ENCODE measurements at regions of chr3 and their contacts with region 1.

Region 1: DNA sequence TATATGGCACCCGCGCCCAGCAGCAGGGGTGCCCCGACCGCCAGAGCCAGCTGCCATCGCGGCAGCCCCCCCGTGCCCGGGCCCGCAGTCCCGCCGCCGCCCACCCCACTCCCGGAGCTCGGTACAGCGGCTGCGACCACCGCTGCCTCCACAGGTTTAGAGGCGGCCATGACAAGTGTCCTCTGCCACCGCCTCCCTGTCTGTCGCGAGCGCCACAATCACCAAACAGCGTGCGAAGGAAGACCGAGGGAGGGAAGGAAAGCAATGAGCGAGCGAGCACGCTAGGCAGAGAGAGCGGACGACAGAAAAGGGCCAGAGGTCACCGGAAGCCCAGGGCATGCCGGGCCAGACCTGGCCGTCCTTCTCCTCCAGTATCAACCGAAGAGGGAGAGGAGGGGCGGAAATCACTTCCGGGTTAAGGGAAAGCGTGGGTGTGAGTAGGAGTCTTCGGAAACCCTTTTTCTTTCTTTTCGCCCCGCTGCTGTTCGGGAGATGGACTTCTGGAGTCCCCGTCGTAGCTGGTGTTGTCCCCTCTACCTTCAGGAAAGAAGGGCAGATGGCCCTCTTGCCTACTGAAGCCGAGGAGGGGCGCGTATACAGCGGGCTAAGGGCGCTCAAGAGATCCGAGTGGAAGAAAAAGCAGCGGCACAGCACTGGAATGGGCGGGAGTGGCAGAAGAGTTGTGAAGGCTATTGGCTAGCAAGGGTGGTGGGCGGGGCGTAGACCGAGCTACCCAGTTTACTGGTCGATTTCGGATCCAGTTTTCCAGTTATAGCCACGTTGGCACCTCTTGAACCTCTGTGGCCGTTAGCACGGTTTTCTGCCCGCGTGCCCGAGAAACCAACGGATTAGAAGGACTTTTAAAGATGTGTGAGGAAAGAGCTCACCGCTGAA is at the starts of genes LNP1 and TOMM70:
- DNase-seq: peak; percentile 97
- H3K4me3 Mint-ChIP-seq: peak within 1 kb of the TSS; percentile 92
- H3K27ac Mint-ChIP-seq: peak within 1 kb of the TSS; percentile 94
- H3K4me1 Mint-ChIP-seq: peaks cover 62% of the 10 kb centered on the region
- H3K27me3 Mint-ChIP-seq: no peaks in the 10 kb centered on the region
- total RNA-seq, gene LNP1: 1.9 to 2.3 TPM
- total RNA-seq, gene TOMM70: 44.9 to 47.1 TPM

Region 2: DNA sequence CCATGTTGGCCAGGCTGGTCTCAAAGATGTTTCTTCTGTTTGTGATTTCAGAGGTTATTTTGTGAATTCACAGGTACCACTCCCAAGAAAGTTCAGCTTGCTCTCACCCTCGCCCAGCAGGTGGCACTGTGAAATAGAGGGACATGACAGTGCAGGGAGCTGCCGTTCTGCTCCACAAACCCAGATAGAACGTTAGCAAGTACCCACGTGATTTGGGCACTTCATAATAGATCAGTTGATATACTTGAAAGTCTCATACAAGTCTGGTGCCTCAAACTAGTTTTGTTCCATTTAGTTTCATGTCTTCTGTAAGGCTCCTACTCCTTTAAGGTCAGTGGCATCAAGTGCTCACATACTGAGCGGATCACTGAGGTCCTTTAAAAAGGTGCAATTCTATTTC is 332.2 kb before region 1 on chr3:
- CTCF ChIA-PET with region 1: no interaction called
- POLR2A ChIA-PET with region 1: no interaction called
- intact Hi-C with region 1: loop called (anchors 1 kb)
- DNase-seq: peak; percentile 84
- H3K4me3 Mint-ChIP-seq: no peak overlapping the region
- H3K27ac Mint-ChIP-seq: no peak overlapping the region
- H3K4me1 Mint-ChIP-seq: peaks cover 26% of the 10 kb centered on the region
- H3K27me3 Mint-ChIP-seq: no peaks in the 10 kb centered on the region

Region 3: GRCh38 chr3:100316641-100317069 is 84.4 kb before region 1 on chr3:
- CTCF ChIA-PET with region 1: no interaction called
- POLR2A ChIA-PET with region 1: no interaction called
- intact Hi-C with region 1: loop called (anchors 1 kb)
- DNase-seq: peak; percentile 36
- H3K4me3 Mint-ChIP-seq: no peak overlapping the region
- H3K27ac Mint-ChIP-seq: no peak overlapping the region
- H3K4me1 Mint-ChIP-seq: peaks cover 8% of the 10 kb centered on the region
- H3K27me3 Mint-ChIP-seq: no peaks in the 10 kb centered on the region

Region 4: GRCh38 chr3:100463002-100463401 is 62.0 kb after region 1 on chr3:
- CTCF ChIA-PET with region 1: interaction called, 13 read pairs
- POLR2A ChIA-PET with region 1: no interaction called
- intact Hi-C with region 1: loop called (anchors 5 kb)
- DNase-seq: peak; percentile 14
- H3K4me3 Mint-ChIP-seq: no peak overlapping the region
- H3K27ac Mint-ChIP-seq: no peak overlapping the region
- H3K4me1 Mint-ChIP-seq: peaks cover 7% of the 10 kb centered on the region
- H3K27me3 Mint-ChIP-seq: no peaks in the 10 kb centered on the region

Region 5: DNA sequence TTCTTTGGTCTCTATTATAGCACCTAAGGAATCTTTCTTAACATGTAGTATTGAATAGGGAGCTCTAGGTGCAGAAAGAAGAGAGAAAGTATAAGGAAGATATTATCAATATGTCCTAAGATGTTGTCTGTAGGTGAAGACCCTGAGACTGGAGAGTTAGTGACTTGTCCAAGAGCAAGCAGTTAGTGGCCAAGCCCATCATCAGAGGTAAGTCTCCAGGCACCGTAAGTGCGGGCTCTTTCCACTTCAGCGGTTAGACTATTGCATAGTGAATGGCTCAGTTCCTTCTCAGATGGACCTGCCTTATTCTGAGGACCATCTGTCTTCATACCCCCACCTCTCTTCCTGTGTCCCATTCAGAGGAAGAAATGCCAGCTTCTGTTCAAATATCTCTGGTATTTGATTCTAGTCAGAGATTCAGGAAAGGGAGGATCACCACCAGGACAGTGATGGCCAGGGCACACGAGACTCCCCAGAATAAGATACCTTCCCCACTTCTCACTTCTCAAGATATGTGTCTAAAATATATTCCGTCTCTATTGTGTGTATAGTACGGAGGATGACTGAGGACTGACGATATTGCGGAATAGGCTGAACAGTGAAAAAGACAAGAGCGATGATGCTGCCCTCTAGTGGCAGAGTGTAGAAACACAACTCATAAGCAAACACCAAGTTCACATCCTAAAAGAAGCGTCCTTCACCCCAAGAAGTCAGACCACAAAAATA is 189.2 kb after region 1 on chr3:
- CTCF ChIA-PET with region 1: interaction called, 13 read pairs
- POLR2A ChIA-PET with region 1: no interaction called
- intact Hi-C with region 1: loop called (anchors 5 kb)
- DNase-seq: peak; percentile 66
- H3K4me3 Mint-ChIP-seq: no peak overlapping the region
- H3K27ac Mint-ChIP-seq: no peak overlapping the region
- H3K4me1 Mint-ChIP-seq: peaks cover 6% of the 10 kb centered on the region
- H3K27me3 Mint-ChIP-seq: peaks cover 4% of the 10 kb centered on the region

Region 6: DNA sequence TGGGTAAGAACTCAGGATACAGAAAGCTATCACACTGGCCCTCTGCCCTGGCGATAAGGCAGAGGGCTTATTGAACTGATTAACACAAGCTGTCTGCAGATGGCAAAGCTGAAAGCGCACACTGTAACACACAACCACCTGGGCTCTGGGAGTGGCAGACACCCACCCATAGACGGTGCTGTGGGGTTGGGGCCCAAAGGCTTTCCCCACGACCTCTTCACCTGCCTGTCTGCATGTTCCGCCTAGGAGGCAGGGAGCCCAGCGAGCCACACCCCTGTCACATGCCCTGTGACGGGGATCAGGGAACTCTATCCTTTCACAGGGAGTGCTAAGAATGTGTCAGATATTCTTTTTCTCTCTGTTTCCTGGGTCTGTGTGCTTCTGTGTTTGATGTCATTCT is 296.1 kb after region 1 on chr3:
- CTCF ChIA-PET with region 1: no interaction called
- POLR2A ChIA-PET with region 1: no interaction called
- intact Hi-C with region 1: no loop called
- DNase-seq: no peak
- H3K4me3 Mint-ChIP-seq: no peak overlapping the region
- H3K27ac Mint-ChIP-seq: no peak overlapping the region
- H3K4me1 Mint-ChIP-seq: no peaks in the 10 kb centered on the region
- H3K27me3 Mint-ChIP-seq: peaks cover 38% of the 10 kb centered on the region

Region 7: DNA sequence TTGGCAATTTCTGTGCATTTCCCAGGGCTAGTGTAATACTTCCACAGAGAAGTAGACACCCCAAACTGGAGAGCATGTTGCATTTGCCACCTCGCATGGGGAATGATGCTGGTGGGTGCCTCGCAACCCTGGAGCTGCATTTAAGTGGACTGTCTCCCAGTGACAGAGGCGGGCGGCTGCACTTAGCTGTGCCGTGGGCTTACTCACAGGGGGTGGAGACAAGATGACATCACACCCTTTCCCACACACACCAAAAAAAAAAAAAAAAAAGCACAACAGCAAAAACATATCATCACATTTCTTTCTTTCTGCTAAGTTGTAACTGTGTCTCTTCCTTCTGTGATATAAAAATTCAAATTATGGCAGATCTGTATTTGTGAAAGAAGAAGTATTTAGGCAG is 592.3 kb after region 1 on chr3 and contains the start of gene ABI3BP:
- CTCF ChIA-PET with region 1: no interaction called
- POLR2A ChIA-PET with region 1: no interaction called
- intact Hi-C with region 1: no loop called
- DNase-seq: peak; percentile 10
- H3K4me3 Mint-ChIP-seq: no peak within 1 kb of the TSS
- H3K27ac Mint-ChIP-seq: no peak within 1 kb of the TSS
- H3K4me1 Mint-ChIP-seq: no peaks in the 10 kb centered on the region
- H3K27me3 Mint-ChIP-seq: peaks cover 2% of the 10 kb centered on the region
- total RNA-seq, gene ABI3BP: not detected

Region 8: GRCh38 chr3:101676765-101677435 is 1275.9 kb after region 1 on chr3 and contains the start of gene ZBTB11:
- CTCF ChIA-PET with region 1: no interaction called
- POLR2A ChIA-PET with region 1: no interaction called
- intact Hi-C with region 1: loop called (anchors 1 kb)
- DNase-seq: peak; percentile 100
- H3K4me3 Mint-ChIP-seq: peak within 1 kb of the TSS; percentile 93
- H3K27ac Mint-ChIP-seq: peak within 1 kb of the TSS; percentile 91
- H3K4me1 Mint-ChIP-seq: peaks cover 57% of the 10 kb centered on the region
- H3K27me3 Mint-ChIP-seq: no peaks in the 10 kb centered on the region
- total RNA-seq, gene ZBTB11: 28.0 to 30.3 TPM

Measured in activated CD4-positive, alpha-beta memory T cell treated with anti-CD3 and anti-CD28 coated beads for 36 hours (primary cell).